Panc1 (cell line): ENCODE measurements at regions of chr2 and their contacts with region 1.

Region 1: DNA sequence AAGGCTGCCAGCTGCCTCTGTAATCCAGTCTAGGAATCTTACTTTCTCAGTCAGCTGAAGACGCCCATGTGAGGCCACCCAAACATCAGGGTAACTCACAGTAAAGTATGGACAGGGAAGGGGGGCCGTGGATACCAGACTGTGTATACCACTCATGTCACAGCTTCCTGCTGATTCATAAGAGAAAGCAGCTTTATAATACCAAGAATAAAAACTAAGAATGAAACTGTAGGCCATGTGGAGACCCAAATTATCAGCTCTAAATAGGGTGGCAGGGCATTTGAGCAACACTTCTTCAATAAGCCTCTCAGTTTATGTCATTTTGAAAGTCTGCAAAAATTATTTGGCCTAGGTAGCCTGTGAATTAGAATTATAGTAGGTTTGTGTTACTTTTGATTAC is 115.0 kb upstream of the CDCA7 start:
- DNase-seq: no peak
- ATAC-seq: no peak
- H3K4me3 ChIP-seq: no peak overlapping the region
- H3K27ac ChIP-seq: no peak overlapping the region
- H3K4me1 ChIP-seq: 0 out of 2 replicates have a peak, but pooled peaks cover 4% of the 10 kb centered on the region
- H3K27me3 ChIP-seq: no peaks in the 10 kb centered on the region
- CTCF ChIP-seq: no peak

Region 2: DNA sequence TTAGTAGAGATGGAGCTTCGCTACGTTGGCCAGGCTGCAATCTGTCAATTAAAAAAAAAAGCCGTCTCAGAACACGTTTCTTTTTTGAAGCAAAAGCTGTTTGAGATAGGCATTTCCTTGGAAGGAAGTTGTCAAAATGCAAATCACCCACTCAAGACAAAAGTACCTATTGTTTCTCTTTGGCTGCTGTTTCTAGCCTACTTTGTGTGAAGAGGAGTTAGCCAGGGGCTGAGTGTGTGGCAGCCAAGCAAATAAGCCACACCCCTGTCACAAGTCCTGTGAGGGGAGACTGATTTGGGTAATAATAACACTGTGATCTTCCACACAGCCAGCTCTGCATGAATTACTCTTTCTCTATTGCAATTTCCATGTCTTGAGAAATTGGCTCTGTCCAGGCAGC is 67.6 kb after region 1 on chr2:
- CTCF ChIA-PET with region 1: no interaction called
- POLR2A ChIA-PET with region 1: interaction called, 14 read pairs
- in situ Hi-C with region 1: no loop called
- intact Hi-C with region 1: no loop called
- DNase-seq: no peak
- ATAC-seq: no peak
- H3K4me3 ChIP-seq: no peak overlapping the region
- H3K27ac ChIP-seq: no peak overlapping the region
- H3K4me1 ChIP-seq: no peaks in the 10 kb centered on the region; the same call in 1 of the 2 replicates
- H3K27me3 ChIP-seq: no peaks in the 10 kb centered on the region
- CTCF ChIP-seq: no peak

Region 3: GRCh38 chr2:173523497-173523896 is 283.9 kb after region 1 on chr2:
- CTCF ChIA-PET with region 1: no interaction called
- POLR2A ChIA-PET with region 1: no interaction called
- in situ Hi-C with region 1: no loop called
- intact Hi-C with region 1: no loop called
- DNase-seq: no peak
- ATAC-seq: no peak
- H3K4me3 ChIP-seq: no peak overlapping the region
- H3K27ac ChIP-seq: no peak overlapping the region
- H3K4me1 ChIP-seq: no peaks in the 10 kb centered on the region
- H3K27me3 ChIP-seq: no peaks in the 10 kb centered on the region
- CTCF ChIP-seq: no peak